ENCODE measurements at regions of chr9 and their contacts with region 1.

Region 1: DNA sequence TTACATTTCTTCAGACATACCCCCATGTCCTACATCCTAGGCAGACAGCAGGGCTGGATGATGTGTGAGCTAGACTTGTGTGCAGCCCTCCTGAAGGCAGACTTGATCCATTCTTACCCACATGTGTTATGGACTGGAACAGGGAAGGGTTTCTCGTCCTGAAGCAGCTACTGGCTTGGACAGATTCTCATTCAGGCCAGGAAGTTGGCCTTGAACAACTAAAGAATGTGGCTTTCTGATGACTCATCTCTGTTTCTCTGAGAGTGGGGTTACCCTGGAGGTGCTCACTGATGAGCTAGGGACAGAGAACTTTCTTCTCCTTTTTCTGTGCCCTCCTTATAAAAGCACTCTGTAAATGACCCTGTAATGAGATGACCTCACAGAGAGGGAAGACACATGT is 246.5 kb downstream of the PCSK5 start:
- DNase-seq: no peak
- H3K4me3 ChIP-seq: no peak overlapping the region
- H3K27ac ChIP-seq: no peak overlapping the region
- H3K4me1 ChIP-seq: no peaks in the 10 kb centered on the region
- H3K27me3 ChIP-seq: peaks cover 61% of the 10 kb centered on the region
- CTCF ChIP-seq: no peak

Region 2: GRCh38 chr9:76188286-76188685 is 51.3 kb after region 1 on chr9:
- CTCF ChIA-PET with region 1: no interaction called
- POLR2A ChIA-PET with region 1: no interaction called
- intact Hi-C with region 1: loop called (anchors 5 kb)
- DNase-seq: no peak
- H3K4me3 ChIP-seq: no peak overlapping the region
- H3K27ac ChIP-seq: no peak overlapping the region
- H3K4me1 ChIP-seq: no peaks in the 10 kb centered on the region
- H3K27me3 ChIP-seq: peaks cover 39% of the 10 kb centered on the region
- CTCF ChIP-seq: no peak

Measured in A673 (cell line).